AG04449 (cell line): ENCODE measurements at regions of chr16 and their contacts with region 1.

Region 1: DNA sequence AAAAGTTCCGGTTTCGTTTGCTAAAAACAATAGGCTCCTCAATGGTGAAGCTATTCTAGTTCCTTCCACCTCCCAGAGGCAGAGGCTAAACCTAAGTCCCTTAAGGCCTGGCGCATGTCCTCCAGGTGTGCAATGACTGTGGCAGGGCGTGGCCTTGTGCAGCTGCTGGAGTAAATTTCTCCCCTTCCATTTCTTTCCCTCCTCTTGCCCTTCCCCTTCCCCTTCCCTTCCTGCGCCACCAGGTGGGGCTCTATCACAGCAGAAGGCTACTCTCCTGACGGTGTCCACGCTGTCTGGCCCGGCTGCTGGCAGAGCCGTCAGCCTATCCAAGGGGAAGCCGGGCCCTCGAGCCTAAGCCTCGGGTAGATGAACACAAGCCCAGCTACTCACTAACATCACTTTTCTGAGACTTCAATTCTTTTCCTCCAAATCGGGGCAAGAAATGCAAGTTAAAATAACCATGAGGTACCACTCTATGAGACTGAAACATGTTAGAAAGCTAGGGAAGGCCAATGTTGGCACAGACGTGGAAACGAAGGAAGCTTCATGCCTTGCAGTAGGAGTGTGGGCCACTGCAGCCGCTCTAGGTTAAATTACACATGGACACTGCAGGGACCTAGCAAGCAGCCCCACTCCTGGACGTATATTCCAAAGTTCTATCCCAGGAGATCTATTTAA is 34.4 kb downstream of the C16orf78 start:
- DNase-seq: peak; percentile 12
- H3K4me3 ChIP-seq: no peak overlapping the region
- CTCF ChIP-seq: peak; percentile 94

Region 2: GRCh38 chr16:48810803-48811453 is 597.1 kb before region 1 on chr16:
- CTCF ChIA-PET with region 1: no interaction called
- POLR2A ChIA-PET with region 1: no interaction called
- DNase-seq: no peak
- H3K4me3 ChIP-seq: no peak overlapping the region
- CTCF ChIP-seq: no peak

Region 3: DNA sequence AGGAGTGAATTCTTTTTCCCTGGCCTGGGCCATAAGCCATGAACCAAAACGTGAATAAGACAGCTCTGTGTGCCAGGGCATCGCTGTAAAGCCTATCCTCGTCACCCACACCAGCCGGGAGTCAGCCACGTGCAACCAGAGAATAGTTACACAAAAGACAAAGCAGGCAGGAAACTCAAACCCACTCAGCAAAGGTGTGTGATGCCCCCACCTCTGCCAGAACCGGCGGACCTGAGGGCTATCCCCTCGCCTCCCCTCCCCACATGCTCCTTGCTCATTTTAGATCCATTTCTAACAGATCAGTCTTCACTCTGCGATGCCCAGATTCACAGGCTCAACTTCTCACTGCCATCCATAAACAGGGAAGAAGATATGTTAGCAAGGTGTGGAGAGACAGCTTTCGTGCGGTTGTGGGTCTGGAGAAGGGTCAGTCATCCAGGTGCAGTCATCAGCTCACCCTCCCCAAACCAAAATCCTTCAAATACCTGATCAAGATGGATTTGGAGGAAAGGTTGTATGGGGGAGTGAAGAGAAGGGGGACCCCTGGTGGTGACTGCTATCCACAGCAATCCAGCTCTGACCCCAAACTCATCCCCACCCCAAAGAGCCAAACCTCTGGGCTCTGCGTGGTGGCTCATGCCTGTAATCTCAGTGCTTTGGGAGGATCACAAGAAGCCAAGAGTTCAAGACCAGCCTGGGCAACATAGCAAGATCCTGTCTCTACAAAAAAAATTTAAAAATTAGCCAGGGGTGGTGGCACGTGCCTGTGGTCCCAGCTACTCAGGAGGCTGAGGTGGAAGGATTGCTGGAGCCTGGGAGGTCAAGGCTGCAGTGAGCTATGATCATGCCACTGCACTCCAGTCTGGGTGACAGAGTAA is 184.8 kb after region 1 on chr16:
- CTCF ChIA-PET with region 1: interaction called, 14 read pairs
- POLR2A ChIA-PET with region 1: no interaction called
- DNase-seq: no peak
- H3K4me3 ChIP-seq: no peak overlapping the region
- CTCF ChIP-seq: peak; percentile 80

Region 4: DNA sequence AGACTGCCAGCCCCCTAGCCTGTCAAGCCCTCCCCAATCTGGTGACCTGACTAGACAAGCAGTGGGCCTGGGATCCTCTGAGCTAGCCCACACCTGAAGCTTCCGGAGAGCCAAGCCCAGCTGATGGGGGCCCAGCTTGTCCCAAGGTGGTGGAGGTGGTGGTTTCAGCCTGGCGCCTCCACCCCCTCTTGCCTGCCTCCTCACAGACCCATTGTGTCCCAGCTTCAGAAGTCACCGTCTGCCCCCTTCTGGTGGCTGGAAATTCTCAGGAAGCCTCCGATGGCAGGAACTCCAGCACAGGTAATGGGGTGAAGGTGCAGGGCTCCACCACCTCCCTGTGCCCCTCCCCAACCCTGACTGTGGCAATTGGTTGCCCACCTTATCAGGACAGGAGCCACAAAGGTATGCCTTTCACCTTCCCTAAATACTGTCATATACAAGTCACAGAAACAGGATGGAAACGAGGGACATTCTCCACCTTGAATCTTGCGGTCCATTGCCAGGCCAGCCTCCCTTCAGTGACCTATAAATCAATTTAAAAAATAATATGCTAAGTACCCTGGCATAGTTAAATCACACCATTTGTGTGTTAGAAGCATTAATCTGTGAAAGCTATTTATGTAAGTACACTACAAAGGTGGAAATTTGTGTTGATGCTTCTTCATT is 513.9 kb after region 1 on chr16:
- CTCF ChIA-PET with region 1: interaction called, 28 read pairs
- POLR2A ChIA-PET with region 1: no interaction called
- DNase-seq: no peak
- H3K4me3 ChIP-seq: no peak overlapping the region
- CTCF ChIP-seq: peak; percentile 71